ENCODE measurements at regions of chr1 and their contacts with region 1.

Region 1: GRCh38 chr1:37240897-37241296 is 206.6 kb upstream of the GRIK3 start:
- DNase-seq: no peak
- ATAC-seq: no peak
- H3K4me3 ChIP-seq: no peak overlapping the region
- H3K27ac ChIP-seq: no peak overlapping the region
- H3K4me1 ChIP-seq: no peaks in the 10 kb centered on the region
- H3K27me3 ChIP-seq: peaks cover 0 to 54% (median 30%) of the 10 kb centered on the region in 7 donors
- CTCF ChIP-seq: no peak

Region 2: GRCh38 chr1:37197411-37197810 is 43.5 kb before region 1 on chr1:
- intact Hi-C with region 1: loop called in 1 of 10 experiments (anchors 10 kb)
- DNase-seq: no peak
- ATAC-seq: no peak
- H3K4me3 ChIP-seq: no peak overlapping the region
- H3K27ac ChIP-seq: no peak overlapping the region
- H3K4me1 ChIP-seq: no peaks in the 10 kb centered on the region
- H3K27me3 ChIP-seq: peaks cover 0 to 33% (median 3%) of the 10 kb centered on the region in 7 donors
- CTCF ChIP-seq: no peak

Region 3: GRCh38 chr1:37372302-37372701 is 131.4 kb after region 1 on chr1:
- intact Hi-C with region 1: no loop called
- DNase-seq: no peak
- ATAC-seq: no peak
- H3K4me3 ChIP-seq: no peak overlapping the region
- H3K27ac ChIP-seq: no peak overlapping the region
- H3K4me1 ChIP-seq: no peaks in the 10 kb centered on the region
- H3K27me3 ChIP-seq: peaks cover 0 to 13% (median 0%) of the 10 kb centered on the region in 7 donors
- CTCF ChIP-seq: no peak

Region 4: GRCh38 chr1:38512789-38513188 is 1271.9 kb after region 1 on chr1:
- intact Hi-C with region 1: no loop called
- DNase-seq: no peak
- ATAC-seq: no peak
- H3K4me3 ChIP-seq: no peak overlapping the region
- H3K27ac ChIP-seq: no peak overlapping the region
- H3K4me1 ChIP-seq: peaks cover 0 to 15% (median 0%) of the 10 kb centered on the region in 9 donors
- H3K27me3 ChIP-seq: peaks cover 0 to 55% (median 34%) of the 10 kb centered on the region in 7 donors
- CTCF ChIP-seq: no peak